Activated T-helper 2 cell treated with anti-CD3 and anti-CD28 coated beads, Interferon-gamma antibody, Interleukin-2, Interleukin-4, amounts not matched to agents 10 μg/mL and 5 μg/mL and 100 μg/mL, durations not matched to agents 14 hours and 24 hours and 36 hours (primary cell): ENCODE measurements at regions of chr11 and their contacts with region 1.

Region 1: GRCh38 chr11:35391922-35392813 is 27.2 kb downstream of the SLC1A2 start:
- DNase-seq: peak; percentile 64
- H3K4me3 Mint-ChIP-seq: no peak overlapping the region
- H3K27ac Mint-ChIP-seq: no peak overlapping the region
- H3K4me1 Mint-ChIP-seq: peaks cover 26% of the 10 kb centered on the region
- H3K27me3 Mint-ChIP-seq: peaks cover 15% of the 10 kb centered on the region

Region 2: GRCh38 chr11:34585735-34586487 is 806.3 kb before region 1 on chr11:
- intact Hi-C with region 1: loop called (anchors 2 kb)
- DNase-seq: no peak
- H3K4me3 Mint-ChIP-seq: no peak overlapping the region
- H3K27ac Mint-ChIP-seq: no peak overlapping the region
- H3K4me1 Mint-ChIP-seq: peaks cover 2% of the 10 kb centered on the region
- H3K27me3 Mint-ChIP-seq: peaks cover 50% of the 10 kb centered on the region

Region 3: DNA sequence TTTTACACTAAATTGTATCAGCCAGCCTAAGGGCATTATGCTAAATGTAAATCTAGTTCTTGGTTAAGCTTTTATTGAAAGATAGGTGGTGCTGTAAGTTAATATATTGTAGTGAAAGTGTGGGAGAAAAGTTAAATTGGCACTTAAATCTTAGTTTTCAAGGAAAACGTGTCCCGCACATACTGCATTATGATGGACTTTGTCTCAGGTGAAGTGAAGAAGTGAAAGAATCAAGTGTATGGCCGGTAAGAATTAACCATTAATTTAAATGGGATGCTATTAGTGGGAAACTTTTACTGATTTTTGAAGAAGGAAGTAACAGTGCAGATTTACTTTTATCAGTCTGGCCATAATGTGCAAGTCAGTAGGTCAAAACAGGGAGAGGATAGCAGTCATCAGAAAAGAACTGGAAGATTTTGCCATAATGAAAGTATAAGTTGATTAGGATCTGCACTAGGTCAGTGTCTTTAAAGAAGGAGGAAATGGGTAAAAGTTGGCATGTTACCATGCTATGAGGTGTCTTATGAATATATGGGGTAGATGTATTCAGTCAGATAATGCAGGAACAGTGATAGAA is 394.1 kb before region 1 on chr11:
- intact Hi-C with region 1: loop called (anchors 1 kb)
- DNase-seq: no peak
- H3K4me3 Mint-ChIP-seq: peak overlapping the region; percentile 10
- H3K27ac Mint-ChIP-seq: no peak overlapping the region
- H3K4me1 Mint-ChIP-seq: peaks cover 22% of the 10 kb centered on the region
- H3K27me3 Mint-ChIP-seq: peaks cover 2% of the 10 kb centered on the region

Region 4: GRCh38 chr11:35082321-35083182 is 309.6 kb before region 1 on chr11:
- intact Hi-C with region 1: loop called (anchors 2 kb)
- DNase-seq: peak; percentile 83
- H3K4me3 Mint-ChIP-seq: peak overlapping the region; percentile 33
- H3K27ac Mint-ChIP-seq: peak overlapping the region; percentile 55
- H3K4me1 Mint-ChIP-seq: peaks cover 81% of the 10 kb centered on the region
- H3K27me3 Mint-ChIP-seq: no peaks in the 10 kb centered on the region

Region 5: GRCh38 chr11:35237860-35238715 is 154.1 kb before region 1 on chr11:
- intact Hi-C with region 1: loop called (anchors 2 kb)
- DNase-seq: peak; percentile 34
- H3K4me3 Mint-ChIP-seq: no peak overlapping the region
- H3K27ac Mint-ChIP-seq: no peak overlapping the region
- H3K4me1 Mint-ChIP-seq: peaks cover 78% of the 10 kb centered on the region
- H3K27me3 Mint-ChIP-seq: peaks cover 13% of the 10 kb centered on the region

Region 6: GRCh38 chr11:35272391-35272902 is 119.7 kb before region 1 on chr11:
- intact Hi-C with region 1: loop called (anchors 1 kb)
- DNase-seq: peak; percentile 36
- H3K4me3 Mint-ChIP-seq: peak overlapping the region; percentile 23
- H3K27ac Mint-ChIP-seq: peak overlapping the region; percentile 79
- H3K4me1 Mint-ChIP-seq: peaks cover 57% of the 10 kb centered on the region
- H3K27me3 Mint-ChIP-seq: peaks cover 18% of the 10 kb centered on the region

Region 7: GRCh38 chr11:35373284-35373933 is 18.8 kb before region 1 on chr11:
- intact Hi-C with region 1: no loop called
- DNase-seq: no peak
- H3K4me3 Mint-ChIP-seq: no peak overlapping the region
- H3K27ac Mint-ChIP-seq: no peak overlapping the region
- H3K4me1 Mint-ChIP-seq: no peaks in the 10 kb centered on the region
- H3K27me3 Mint-ChIP-seq: peaks cover 25% of the 10 kb centered on the region